ENCODE measurements at regions of chr5 and their contacts with region 1.

Region 1: GRCh38 chr5:5421961-5422818 is at the start of gene ICE1:
- DNase-seq: peak; percentile 97 to 99
- H3K4me3 ChIP-seq: peak within 1 kb of the TSS; percentile 67
- H3K4me3 Mint-ChIP-seq: no peak within 1 kb of the TSS
- H3K27ac Mint-ChIP-seq: no peak within 1 kb of the TSS
- H3K4me1 ChIP-seq: peaks cover 20% of the 10 kb centered on the region
- H3K4me1 Mint-ChIP-seq: peaks cover 12% of the 10 kb centered on the region
- H3K27me3 ChIP-seq: no peaks in the 10 kb centered on the region
- H3K27me3 Mint-ChIP-seq: no peaks in the 10 kb centered on the region
- CTCF ChIP-seq: no peak
- total RNA-seq, gene ICE1: 30.6 and 33.9 TPM in 2 replicates

Region 2: DNA sequence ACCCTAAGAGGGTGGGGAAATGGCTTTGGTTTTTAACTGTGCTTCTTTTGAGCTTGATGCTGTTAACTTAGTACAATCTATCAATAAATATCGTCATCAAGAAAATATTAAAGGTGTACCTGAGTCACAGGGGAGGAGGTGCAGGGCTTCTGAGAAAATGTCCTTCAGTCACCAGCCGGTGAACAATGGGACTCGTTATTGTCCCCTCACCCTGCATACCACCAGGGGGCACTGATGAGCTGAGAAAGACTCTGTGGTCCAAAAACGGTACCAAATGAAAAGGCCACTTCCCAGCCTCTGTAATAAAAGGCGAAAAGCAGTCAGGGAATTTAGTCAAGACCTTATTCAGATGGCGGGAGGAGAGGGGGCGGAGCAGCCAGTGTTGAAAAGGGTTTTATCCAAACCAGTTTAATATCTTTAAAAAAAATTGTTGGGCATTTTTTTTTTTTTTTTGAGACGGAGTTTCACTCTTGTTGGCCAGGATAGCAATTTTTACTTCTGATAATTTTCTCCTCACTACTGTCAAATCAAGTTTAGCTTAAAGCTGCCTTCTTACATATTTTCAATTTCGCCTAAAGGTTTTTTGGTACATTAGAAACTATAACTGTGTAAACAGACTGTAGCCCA is 554.0 kb before region 1 on chr5:
- CTCF ChIA-PET with region 1: no interaction called
- POLR2A ChIA-PET with region 1: no interaction called
- intact Hi-C with region 1: loop called (anchors 1 kb)
- DNase-seq: peak; percentile 56 to 79
- H3K4me3 ChIP-seq: no peak overlapping the region
- H3K4me3 Mint-ChIP-seq: no peak overlapping the region
- H3K27ac Mint-ChIP-seq: no peak overlapping the region
- H3K4me1 ChIP-seq: no peaks in the 10 kb centered on the region
- H3K4me1 Mint-ChIP-seq: no peaks in the 10 kb centered on the region
- H3K27me3 ChIP-seq: no peaks in the 10 kb centered on the region
- H3K27me3 Mint-ChIP-seq: peaks cover 10% of the 10 kb centered on the region
- CTCF ChIP-seq: peak; percentile 73 to 83

Region 3: GRCh38 chr5:4879693-4880303 is 542.4 kb before region 1 on chr5:
- CTCF ChIA-PET with region 1: interaction called, 6 read pairs
- POLR2A ChIA-PET with region 1: no interaction called
- intact Hi-C with region 1: loop called (anchors 1 kb)
- DNase-seq: peak; percentile 77 to 87
- H3K4me3 ChIP-seq: no peak overlapping the region
- H3K4me3 Mint-ChIP-seq: no peak overlapping the region
- H3K27ac Mint-ChIP-seq: peak overlapping the region; percentile 38
- H3K4me1 ChIP-seq: no peaks in the 10 kb centered on the region
- H3K4me1 Mint-ChIP-seq: no peaks in the 10 kb centered on the region
- H3K27me3 ChIP-seq: no peaks in the 10 kb centered on the region
- H3K27me3 Mint-ChIP-seq: no peaks in the 10 kb centered on the region
- CTCF ChIP-seq: peak; percentile 94 to 96

Region 4: GRCh38 chr5:5063533-5063953 is 358.6 kb before region 1 on chr5:
- CTCF ChIA-PET with region 1: interaction called, 3 read pairs
- POLR2A ChIA-PET with region 1: no interaction called
- intact Hi-C with region 1: loop called (anchors 1 kb)
- DNase-seq: peak; percentile 86 to 88
- H3K4me3 ChIP-seq: no peak overlapping the region
- H3K4me3 Mint-ChIP-seq: peak overlapping the region; percentile 32
- H3K27ac Mint-ChIP-seq: peak overlapping the region; percentile 93
- H3K4me1 ChIP-seq: peaks cover 52% of the 10 kb centered on the region
- H3K4me1 Mint-ChIP-seq: peaks cover 38% of the 10 kb centered on the region
- H3K27me3 ChIP-seq: no peaks in the 10 kb centered on the region
- H3K27me3 Mint-ChIP-seq: no peaks in the 10 kb centered on the region
- CTCF ChIP-seq: peak; percentile 48 to 49

Region 5: GRCh38 chr5:5141625-5142532 is 280.3 kb before region 1 on chr5:
- CTCF ChIA-PET with region 1: no interaction called
- POLR2A ChIA-PET with region 1: no interaction called
- intact Hi-C with region 1: loop called (anchors 1 kb)
- DNase-seq: peak in 1 of 2 experiments; percentile 62
- H3K4me3 ChIP-seq: no peak overlapping the region
- H3K4me3 Mint-ChIP-seq: no peak overlapping the region
- H3K27ac Mint-ChIP-seq: no peak overlapping the region
- H3K4me1 ChIP-seq: peaks cover 3% of the 10 kb centered on the region; the same call in 1 of the 2 replicates
- H3K4me1 Mint-ChIP-seq: peaks cover 2% of the 10 kb centered on the region
- H3K27me3 ChIP-seq: no peaks in the 10 kb centered on the region
- H3K27me3 Mint-ChIP-seq: no peaks in the 10 kb centered on the region
- CTCF ChIP-seq: peak; percentile 66 to 69

Region 6: GRCh38 chr5:5752844-5753243 is 330.7 kb after region 1 on chr5:
- CTCF ChIA-PET with region 1: no interaction called
- POLR2A ChIA-PET with region 1: no interaction called
- intact Hi-C with region 1: no loop called
- DNase-seq: no peak
- H3K4me3 ChIP-seq: no peak overlapping the region
- H3K4me3 Mint-ChIP-seq: no peak overlapping the region
- H3K27ac Mint-ChIP-seq: no peak overlapping the region
- H3K4me1 ChIP-seq: no peaks in the 10 kb centered on the region
- H3K4me1 Mint-ChIP-seq: no peaks in the 10 kb centered on the region
- H3K27me3 ChIP-seq: no peaks in the 10 kb centered on the region; the same call in 1 of the 2 replicates
- H3K27me3 Mint-ChIP-seq: peaks cover 20% of the 10 kb centered on the region
- CTCF ChIP-seq: no peak

Measured in Caco-2 (cell line).